ENCODE measurements at regions of chr6 and their contacts with region 1.

Region 1: DNA sequence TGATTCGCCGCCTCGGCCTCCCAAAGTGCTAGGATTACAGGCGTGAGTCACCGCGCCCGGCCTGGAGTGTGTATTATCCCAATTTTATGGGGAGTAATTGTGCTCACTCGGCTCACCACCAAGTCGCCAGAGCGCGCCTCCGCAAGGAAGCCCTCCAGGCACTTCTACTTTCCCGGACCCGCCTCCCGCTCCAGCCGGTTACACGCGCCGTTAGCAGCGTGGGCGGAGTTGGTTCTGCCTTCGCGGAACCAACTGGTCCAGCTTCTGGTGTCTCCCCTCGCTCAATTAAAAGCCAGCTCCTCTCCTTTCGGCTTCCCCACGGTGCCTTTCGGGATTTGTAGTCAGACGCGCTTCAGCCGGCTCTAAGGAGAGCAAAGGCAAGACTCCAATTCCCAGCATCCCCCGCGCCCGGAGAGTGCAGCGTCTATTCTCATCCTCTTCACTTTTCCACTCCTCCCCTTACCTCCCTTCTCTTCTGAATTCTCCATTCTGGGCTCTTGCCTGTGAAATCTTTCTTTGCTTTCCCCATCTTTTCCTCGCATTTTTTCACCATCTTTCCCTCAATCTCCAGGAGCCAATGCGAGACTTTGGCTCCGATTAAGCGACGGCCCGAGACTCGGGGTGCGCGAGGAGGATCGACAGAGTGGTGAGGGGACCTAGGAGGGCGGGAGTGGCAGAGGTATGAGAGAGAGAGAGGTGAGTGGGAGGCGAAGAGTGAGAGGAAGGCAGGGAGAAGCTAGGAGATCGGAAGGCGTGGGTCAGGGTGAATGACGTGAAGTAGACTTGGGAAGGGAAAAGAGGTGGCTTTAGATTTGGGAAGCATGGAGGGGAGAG is at the start of gene GTF2H4:
- DNase-seq: peak; percentile 99
- H3K4me3 ChIP-seq: peak within 1 kb of the TSS; percentile 70 to 92 (median 71)
- H3K27ac ChIP-seq: peak within 1 kb of the TSS; percentile 63
- H3K4me1 ChIP-seq: peaks cover 8% of the 10 kb centered on the region
- H3K27me3 ChIP-seq: no peaks in the 10 kb centered on the region
- CTCF ChIP-seq: no peak
- total RNA-seq, gene GTF2H4: 17.0 to 41.1 TPM

Region 2: DNA sequence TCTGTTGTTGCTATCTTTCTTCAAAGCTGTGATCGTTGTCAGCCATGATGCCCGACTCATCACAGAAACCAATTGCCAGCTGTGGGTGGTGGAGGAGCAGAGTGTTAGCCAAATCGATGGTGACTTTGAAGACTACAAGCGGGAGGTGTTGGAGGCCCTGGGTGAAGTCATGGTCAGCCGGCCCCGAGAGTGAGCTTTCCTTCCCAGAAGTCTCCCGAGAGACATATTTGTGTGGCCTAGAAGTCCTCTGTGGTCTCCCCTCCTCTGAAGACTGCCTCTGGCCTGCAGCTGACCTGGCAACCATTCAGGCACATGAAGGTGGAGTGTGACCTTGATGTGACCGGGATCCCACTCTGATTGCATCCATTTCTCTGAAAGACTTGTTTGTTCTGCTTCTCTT is 317.5 kb before region 1 on chr6:
- CTCF ChIA-PET with region 1: no interaction called
- dilution Hi-C with region 1: no loop called
- in situ Hi-C with region 1: no loop called
- intact Hi-C with region 1: no loop called
- DNase-seq: no peak
- H3K4me3 ChIP-seq: no peak overlapping the region
- H3K27ac ChIP-seq: peak overlapping the region; percentile 5
- H3K4me1 ChIP-seq: peaks cover 20% of the 10 kb centered on the region
- H3K27me3 ChIP-seq: no peaks in the 10 kb centered on the region
- CTCF ChIP-seq: no peak

Region 3: GRCh38 chr6:30883685-30884520 is 24.1 kb before region 1 on chr6 and contains the start of gene DDR1:
- CTCF ChIA-PET with region 1: interaction called, 5 read pairs
- dilution Hi-C with region 1: no loop called
- in situ Hi-C with region 1: no loop called
- intact Hi-C with region 1: loop called (anchors 1 kb)
- DNase-seq: peak; percentile 89
- H3K4me3 ChIP-seq: peak within 1 kb of the TSS; percentile 60 to 76 (median 73)
- H3K27ac ChIP-seq: peak within 1 kb of the TSS; percentile 95
- H3K4me1 ChIP-seq: peaks cover 58% of the 10 kb centered on the region
- H3K27me3 ChIP-seq: no peaks in the 10 kb centered on the region
- CTCF ChIP-seq: no peak
- total RNA-seq, gene DDR1: 192 to 315 TPM

Region 4: DNA sequence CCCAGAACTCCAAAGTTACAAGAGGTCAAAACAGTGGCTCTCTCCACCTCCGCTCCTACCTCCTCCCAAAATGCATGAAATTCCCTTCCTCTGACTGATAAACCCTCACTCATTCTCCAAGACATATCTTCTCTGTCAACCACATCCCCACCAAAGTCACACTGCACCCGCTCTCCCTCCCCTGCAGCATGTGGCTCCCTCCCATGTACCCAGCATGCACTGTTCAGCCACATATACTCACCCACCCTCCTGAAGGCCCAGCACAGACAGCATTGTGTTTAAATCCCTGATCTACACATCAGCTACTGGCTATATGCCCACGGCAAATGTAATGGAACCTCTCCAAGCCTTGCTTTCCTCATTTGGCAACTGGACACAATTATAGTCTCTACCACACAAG is 268.0 kb after region 1 on chr6:
- CTCF ChIA-PET with region 1: interaction called, 29 read pairs
- dilution Hi-C with region 1: no loop called
- in situ Hi-C with region 1: no loop called
- intact Hi-C with region 1: no loop called
- DNase-seq: peak; percentile 21
- H3K4me3 ChIP-seq: no peak overlapping the region
- H3K27ac ChIP-seq: no peak overlapping the region
- H3K4me1 ChIP-seq: no peaks in the 10 kb centered on the region
- H3K27me3 ChIP-seq: no peaks in the 10 kb centered on the region
- CTCF ChIP-seq: no peak